GM10248 (cell line): ENCODE measurements at regions of chr15 and their contacts with region 1.

Region 1: GRCh38 chr15:47870956-47871625 is 153.8 kb downstream of the SEMA6D start:
- DNase-seq: no peak
- CTCF ChIP-seq: no peak

Region 2: DNA sequence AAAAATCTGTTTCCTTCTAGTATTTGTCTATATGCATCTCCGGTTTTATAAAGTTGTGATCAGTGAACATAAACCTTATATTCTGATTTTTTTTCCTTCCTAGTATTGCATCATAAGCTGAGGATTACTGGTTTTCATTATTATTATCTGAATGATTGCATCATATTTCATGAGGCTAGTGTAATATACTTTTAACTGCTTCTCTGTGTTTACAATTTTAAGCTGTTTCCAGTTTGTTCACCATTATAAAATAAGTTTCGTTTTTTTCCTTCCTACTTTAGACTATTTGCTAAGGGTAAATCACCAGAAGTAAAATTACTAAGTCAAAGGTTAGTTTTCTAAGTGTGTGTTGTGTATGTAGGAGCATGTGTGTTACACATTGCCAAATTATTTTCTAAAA is 133.6 kb before region 1 on chr15:
- CTCF ChIA-PET with region 1: no interaction called
- POLR2A ChIA-PET with region 1: no interaction called
- DNase-seq: no peak
- CTCF ChIP-seq: no peak

Region 3: DNA sequence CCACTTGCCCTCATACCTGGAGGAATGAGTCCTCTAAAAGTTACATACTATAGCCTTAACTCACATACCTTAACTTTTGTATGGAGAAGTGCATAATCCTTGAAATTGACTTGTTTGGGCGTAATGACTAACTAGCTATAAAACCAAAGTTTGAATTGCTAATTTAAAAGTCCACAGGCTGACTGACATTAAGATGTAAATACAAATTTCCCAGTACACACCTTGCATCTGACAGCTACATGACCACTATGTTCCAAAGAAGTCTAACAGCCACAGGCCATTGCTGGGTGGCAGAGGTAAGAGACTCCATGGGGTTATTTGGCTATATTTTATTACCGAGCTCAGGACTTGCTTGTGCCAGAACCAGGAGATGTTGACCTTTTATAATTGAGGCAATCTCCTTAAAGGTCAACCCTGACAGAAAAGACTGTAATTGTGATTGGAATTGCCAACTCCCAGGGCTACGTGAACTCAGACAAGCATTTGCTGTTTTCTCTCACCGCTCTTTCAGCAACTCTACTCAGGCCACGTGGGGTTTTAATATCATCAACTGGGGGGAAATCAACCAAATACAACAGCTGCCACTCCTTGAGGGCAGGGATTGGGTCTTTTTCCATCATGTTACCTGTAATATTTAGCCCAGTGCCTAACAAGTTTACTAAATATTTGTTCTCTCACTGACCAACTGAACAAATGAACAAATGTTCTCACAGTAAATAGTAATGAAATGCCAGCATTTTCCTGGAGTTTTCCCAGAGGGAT is 13.9 kb before region 1 on chr15:
- CTCF ChIA-PET with region 1: interaction called, 10 read pairs
- POLR2A ChIA-PET with region 1: no interaction called
- DNase-seq: no peak
- CTCF ChIP-seq: no peak